ENCODE measurements at regions of chr3 and their contacts with region 1.

Region 1: GRCh38 chr3:190120269-190121060 is at the start of gene P3H2:
- DNase-seq: peak; percentile 93
- H3K4me3 ChIP-seq: peak within 1 kb of the TSS; percentile 60 to 83 (median 62)
- H3K27ac ChIP-seq: peak within 1 kb of the TSS; percentile 51
- H3K4me1 ChIP-seq: peaks cover 9% of the 10 kb centered on the region
- H3K27me3 ChIP-seq: peaks cover 0 to 2% of the 10 kb centered on the region in 2 experiments
- CTCF ChIP-seq: peak; percentile 54 to 70
- POLR2A ChIP-seq: no peak
- total RNA-seq, gene P3H2: 4.8 and 6.6 TPM in 2 replicates

Region 2: GRCh38 chr3:189967254-189967865 is 153.1 kb before region 1 on chr3:
- CTCF ChIA-PET with region 1: interaction called, 37 read pairs
- POLR2A ChIA-PET with region 1: no interaction called
- dilution Hi-C with region 1: no loop called
- intact Hi-C with region 1: loop called (anchors 1 kb)
- DNase-seq: peak; percentile 71
- H3K4me3 ChIP-seq: no peak overlapping the region
- H3K27ac ChIP-seq: no peak overlapping the region
- H3K4me1 ChIP-seq: no peaks in the 10 kb centered on the region
- H3K27me3 ChIP-seq: no peaks in the 10 kb centered on the region
- CTCF ChIP-seq: peak; percentile 58 to 63
- POLR2A ChIP-seq: no peak

Region 3: GRCh38 chr3:190024912-190025311 is 95.6 kb before region 1 on chr3:
- CTCF ChIA-PET with region 1: interaction called, 19 read pairs
- POLR2A ChIA-PET with region 1: interaction called, 4 read pairs
- dilution Hi-C with region 1: no loop called
- intact Hi-C with region 1: loop called (anchors 2 kb)
- DNase-seq: peak; percentile 76
- H3K4me3 ChIP-seq: peak overlapping the region in 1 of 3 experiments; percentile 11
- H3K27ac ChIP-seq: peak overlapping the region; percentile 90
- H3K4me1 ChIP-seq: peaks cover 12% of the 10 kb centered on the region
- H3K27me3 ChIP-seq: no peaks in the 10 kb centered on the region
- CTCF ChIP-seq: no peak
- POLR2A ChIP-seq: no peak

Region 4: DNA sequence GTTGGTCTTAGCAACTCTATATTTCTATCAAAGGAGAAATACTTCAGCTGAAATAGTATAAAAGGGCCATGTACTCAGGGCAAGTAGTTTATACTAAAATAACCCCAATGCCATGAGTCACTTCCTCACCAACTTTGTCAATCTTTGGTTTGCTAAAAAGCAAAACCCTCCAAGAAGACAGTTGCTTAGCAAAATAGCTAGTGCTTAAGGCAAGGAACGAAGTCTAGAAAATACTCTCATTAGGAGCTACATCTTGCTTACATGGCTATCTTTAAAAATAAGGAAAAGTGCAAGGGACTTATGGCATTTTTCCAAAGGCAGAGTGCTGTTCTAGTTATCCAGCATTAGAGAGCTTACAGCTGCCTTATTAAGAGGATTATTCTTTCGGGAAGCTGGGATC is 28.2 kb before region 1 on chr3:
- CTCF ChIA-PET with region 1: interaction called, 8 read pairs
- POLR2A ChIA-PET with region 1: interaction called, 8 read pairs
- dilution Hi-C with region 1: no loop called
- intact Hi-C with region 1: loop called (anchors 2 kb)
- DNase-seq: peak; percentile 78
- H3K4me3 ChIP-seq: peak overlapping the region in 1 of 3 experiments; percentile 23
- H3K27ac ChIP-seq: no peak overlapping the region
- H3K4me1 ChIP-seq: peaks cover 19% of the 10 kb centered on the region
- H3K27me3 ChIP-seq: no peaks in the 10 kb centered on the region
- CTCF ChIP-seq: no peak
- POLR2A ChIP-seq: no peak

Region 5: GRCh38 chr3:190139365-190139764 is 18.9 kb after region 1 on chr3:
- CTCF ChIA-PET with region 1: no interaction called
- POLR2A ChIA-PET with region 1: no interaction called
- dilution Hi-C with region 1: no loop called
- intact Hi-C with region 1: no loop called
- DNase-seq: no peak
- H3K4me3 ChIP-seq: no peak overlapping the region
- H3K27ac ChIP-seq: no peak overlapping the region
- H3K4me1 ChIP-seq: no peaks in the 10 kb centered on the region
- H3K27me3 ChIP-seq: peaks cover under 1 to 6% of the 10 kb centered on the region in 2 experiments
- CTCF ChIP-seq: no peak
- POLR2A ChIP-seq: no peak

Region 6: GRCh38 chr3:190205739-190206138 is 85.3 kb after region 1 on chr3:
- CTCF ChIA-PET with region 1: interaction called, 16 read pairs
- POLR2A ChIA-PET with region 1: no interaction called
- dilution Hi-C with region 1: no loop called
- intact Hi-C with region 1: loop called (anchors 5 kb)
- DNase-seq: no peak
- H3K4me3 ChIP-seq: no peak overlapping the region
- H3K27ac ChIP-seq: no peak overlapping the region
- H3K4me1 ChIP-seq: no peaks in the 10 kb centered on the region
- H3K27me3 ChIP-seq: peaks cover 0 to 2% of the 10 kb centered on the region in 2 experiments
- CTCF ChIP-seq: no peak
- POLR2A ChIP-seq: no peak

Region 7: DNA sequence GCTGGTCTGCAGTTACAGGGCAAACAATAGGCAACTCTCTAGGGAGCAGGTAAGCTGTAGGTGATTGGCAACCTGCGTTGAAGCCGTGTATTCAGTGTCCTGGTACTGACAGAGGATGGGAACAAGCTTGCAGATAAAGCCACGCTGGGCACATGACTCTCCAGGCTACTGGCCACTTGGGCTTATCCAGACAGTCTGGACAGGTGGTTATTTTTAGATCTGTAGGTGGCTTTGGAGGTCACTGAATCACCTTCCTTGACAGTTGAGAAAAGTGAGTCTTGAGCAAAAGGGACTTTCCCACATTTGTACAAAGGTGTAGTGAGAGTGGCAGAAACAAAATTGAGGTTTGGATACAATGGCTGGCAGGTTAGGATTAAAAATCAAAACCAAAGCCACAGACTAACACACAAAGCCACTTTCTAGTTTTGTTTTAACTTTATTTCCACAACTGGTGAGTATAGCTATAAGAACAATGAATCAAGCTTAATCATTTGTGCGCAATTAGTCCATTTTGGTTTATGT is 371.1 kb after region 1 on chr3:
- CTCF ChIA-PET with region 1: no interaction called
- POLR2A ChIA-PET with region 1: no interaction called
- dilution Hi-C with region 1: no loop called
- intact Hi-C with region 1: no loop called
- DNase-seq: no peak
- H3K4me3 ChIP-seq: no peak overlapping the region
- H3K27ac ChIP-seq: no peak overlapping the region
- H3K4me1 ChIP-seq: no peaks in the 10 kb centered on the region
- H3K27me3 ChIP-seq: peaks cover 41 to 54% of the 10 kb centered on the region in 2 experiments
- CTCF ChIP-seq: no peak
- POLR2A ChIP-seq: no peak

Region 8: DNA sequence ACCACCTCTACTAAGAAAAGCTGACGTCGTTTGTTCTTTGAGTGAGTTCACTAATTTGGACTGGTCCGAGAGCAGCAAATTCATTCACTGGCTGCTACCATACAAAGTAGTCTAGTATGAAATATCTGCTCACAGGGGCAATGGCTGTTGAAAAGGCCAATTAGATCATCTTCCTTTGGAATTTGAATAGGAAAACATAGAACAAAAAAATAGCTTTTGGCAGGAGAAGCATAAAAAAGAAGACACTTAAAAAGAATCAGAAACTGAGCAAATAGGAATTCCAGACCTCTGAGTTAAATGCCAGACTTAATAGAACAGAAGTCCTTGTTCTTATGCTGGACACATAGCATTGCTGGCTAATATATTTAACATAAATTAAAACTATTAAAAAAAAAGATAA is 552.7 kb after region 1 on chr3:
- CTCF ChIA-PET with region 1: no interaction called
- POLR2A ChIA-PET with region 1: no interaction called
- dilution Hi-C with region 1: no loop called
- intact Hi-C with region 1: no loop called
- DNase-seq: no peak
- H3K4me3 ChIP-seq: no peak overlapping the region
- H3K27ac ChIP-seq: no peak overlapping the region
- H3K4me1 ChIP-seq: no peaks in the 10 kb centered on the region
- H3K27me3 ChIP-seq: no peaks in the 10 kb centered on the region
- CTCF ChIP-seq: no peak
- POLR2A ChIP-seq: no peak